Activated B cell treated with CpG ODN at 0.5 μM for 24 hours (primary cell): ENCODE measurements at regions of chr7 and their contacts with region 1.

Region 1: GRCh38 chr7:130961128-130961601 is 227.2 kb upstream of the KLF14 start:
- DNase-seq: peak; percentile 54
- ATAC-seq: peak; percentile 78
- H3K4me3 Mint-ChIP-seq: peak overlapping the region; percentile 87
- H3K27ac Mint-ChIP-seq: peak overlapping the region; percentile 98
- H3K4me1 Mint-ChIP-seq: peaks cover 69% of the 10 kb centered on the region
- H3K27me3 Mint-ChIP-seq: no peaks in the 10 kb centered on the region
- CTCF ChIP-seq: no peak

Region 2: DNA sequence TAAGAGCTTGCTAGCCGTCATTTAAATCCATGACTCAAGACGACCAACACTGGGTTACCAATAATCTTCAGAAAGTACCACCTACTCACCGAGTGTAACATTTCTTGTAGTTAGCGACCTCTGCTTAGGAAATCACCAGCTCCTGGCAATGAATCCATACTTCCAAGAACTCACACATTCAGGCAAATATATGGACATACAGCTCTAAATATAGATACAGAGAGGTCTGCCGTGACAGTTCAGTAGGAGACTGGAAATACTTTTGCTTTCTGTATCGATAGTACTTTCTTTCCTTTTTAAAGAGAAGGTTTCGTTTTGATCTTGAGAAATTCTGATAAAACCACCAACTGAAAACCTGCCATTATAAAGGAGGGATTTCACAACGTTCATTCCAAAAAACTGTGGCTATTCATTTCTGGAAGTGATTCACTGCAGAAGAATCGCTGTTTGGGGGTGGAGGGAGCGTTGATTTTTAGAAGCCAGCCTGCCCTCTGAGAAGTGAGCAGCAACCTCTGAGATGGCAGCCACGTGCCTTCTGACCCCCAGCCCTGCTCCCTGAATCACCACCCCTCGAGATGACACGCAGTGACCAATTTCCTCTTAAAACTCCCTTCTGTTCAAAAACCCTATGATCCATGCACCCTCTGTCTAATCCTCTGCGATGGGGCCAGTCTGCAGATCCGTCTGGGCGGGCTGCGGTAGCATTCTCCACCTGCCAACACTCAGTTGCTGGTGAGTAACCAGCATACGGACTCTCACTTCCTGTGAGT is 48.1 kb before region 1 on chr7:
- CTCF ChIA-PET with region 1: no interaction called
- POLR2A ChIA-PET with region 1: interaction called, 36 read pairs
- intact Hi-C with region 1: loop called (anchors 1 kb)
- DNase-seq: peak; percentile 54
- ATAC-seq: peak; percentile 91
- H3K4me3 Mint-ChIP-seq: peak overlapping the region; percentile 87
- H3K27ac Mint-ChIP-seq: peak overlapping the region; percentile 90
- H3K4me1 Mint-ChIP-seq: peaks cover 86% of the 10 kb centered on the region
- H3K27me3 Mint-ChIP-seq: no peaks in the 10 kb centered on the region
- CTCF ChIP-seq: no peak

Region 3: GRCh38 chr7:130941322-130942210 is 19.6 kb before region 1 on chr7:
- CTCF ChIA-PET with region 1: interaction called, 4 read pairs
- POLR2A ChIA-PET with region 1: interaction called, 117 read pairs
- intact Hi-C with region 1: loop called (anchors 1 kb)
- DNase-seq: no peak
- ATAC-seq: no peak
- H3K4me3 Mint-ChIP-seq: peak overlapping the region; percentile 78
- H3K27ac Mint-ChIP-seq: peak overlapping the region; percentile 84
- H3K4me1 Mint-ChIP-seq: peaks cover 90% of the 10 kb centered on the region
- H3K27me3 Mint-ChIP-seq: no peaks in the 10 kb centered on the region
- CTCF ChIP-seq: no peak

Region 4: GRCh38 chr7:131027287-131027773 is 66.2 kb after region 1 on chr7:
- CTCF ChIA-PET with region 1: no interaction called
- POLR2A ChIA-PET with region 1: interaction called, 24 read pairs
- intact Hi-C with region 1: loop called (anchors 1 kb)
- DNase-seq: no peak
- ATAC-seq: peak; percentile 6
- H3K4me3 Mint-ChIP-seq: peak overlapping the region; percentile 66
- H3K27ac Mint-ChIP-seq: peak overlapping the region; percentile 98
- H3K4me1 Mint-ChIP-seq: peaks cover 93% of the 10 kb centered on the region
- H3K27me3 Mint-ChIP-seq: no peaks in the 10 kb centered on the region
- CTCF ChIP-seq: no peak

Region 5: GRCh38 chr7:131057015-131057793 is 96.0 kb after region 1 on chr7:
- CTCF ChIA-PET with region 1: no interaction called
- POLR2A ChIA-PET with region 1: interaction called, 19 read pairs
- intact Hi-C with region 1: no loop called
- DNase-seq: no peak
- ATAC-seq: peak; percentile 59
- H3K4me3 Mint-ChIP-seq: peak overlapping the region; percentile 76
- H3K27ac Mint-ChIP-seq: peak overlapping the region; percentile 97
- H3K4me1 Mint-ChIP-seq: peaks cover 79% of the 10 kb centered on the region
- H3K27me3 Mint-ChIP-seq: no peaks in the 10 kb centered on the region
- CTCF ChIP-seq: no peak

Region 6: DNA sequence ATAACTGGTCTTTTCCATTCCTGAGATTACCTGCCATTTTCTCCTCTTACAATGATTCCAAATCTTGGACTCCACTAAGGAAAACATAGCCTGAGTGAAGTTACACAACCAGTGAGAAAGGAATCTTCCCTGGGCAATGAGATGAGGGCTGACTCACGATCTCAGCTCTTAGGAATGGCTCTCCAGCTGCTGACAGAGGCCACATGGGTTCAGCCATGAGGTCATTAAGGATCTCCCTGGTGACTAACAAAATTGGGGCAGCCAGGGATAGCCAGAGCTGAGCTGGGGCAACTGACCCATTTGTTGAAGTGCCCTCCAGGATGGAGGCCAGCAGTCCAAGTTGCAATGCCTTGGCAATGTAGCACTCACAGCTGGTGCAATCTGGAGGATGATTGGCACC is 287.8 kb after region 1 on chr7:
- CTCF ChIA-PET with region 1: no interaction called
- POLR2A ChIA-PET with region 1: no interaction called
- intact Hi-C with region 1: no loop called
- DNase-seq: no peak
- ATAC-seq: no peak
- H3K4me3 Mint-ChIP-seq: no peak overlapping the region
- H3K27ac Mint-ChIP-seq: no peak overlapping the region
- H3K4me1 Mint-ChIP-seq: no peaks in the 10 kb centered on the region
- H3K27me3 Mint-ChIP-seq: peaks cover 10% of the 10 kb centered on the region
- CTCF ChIP-seq: no peak

Region 7: DNA sequence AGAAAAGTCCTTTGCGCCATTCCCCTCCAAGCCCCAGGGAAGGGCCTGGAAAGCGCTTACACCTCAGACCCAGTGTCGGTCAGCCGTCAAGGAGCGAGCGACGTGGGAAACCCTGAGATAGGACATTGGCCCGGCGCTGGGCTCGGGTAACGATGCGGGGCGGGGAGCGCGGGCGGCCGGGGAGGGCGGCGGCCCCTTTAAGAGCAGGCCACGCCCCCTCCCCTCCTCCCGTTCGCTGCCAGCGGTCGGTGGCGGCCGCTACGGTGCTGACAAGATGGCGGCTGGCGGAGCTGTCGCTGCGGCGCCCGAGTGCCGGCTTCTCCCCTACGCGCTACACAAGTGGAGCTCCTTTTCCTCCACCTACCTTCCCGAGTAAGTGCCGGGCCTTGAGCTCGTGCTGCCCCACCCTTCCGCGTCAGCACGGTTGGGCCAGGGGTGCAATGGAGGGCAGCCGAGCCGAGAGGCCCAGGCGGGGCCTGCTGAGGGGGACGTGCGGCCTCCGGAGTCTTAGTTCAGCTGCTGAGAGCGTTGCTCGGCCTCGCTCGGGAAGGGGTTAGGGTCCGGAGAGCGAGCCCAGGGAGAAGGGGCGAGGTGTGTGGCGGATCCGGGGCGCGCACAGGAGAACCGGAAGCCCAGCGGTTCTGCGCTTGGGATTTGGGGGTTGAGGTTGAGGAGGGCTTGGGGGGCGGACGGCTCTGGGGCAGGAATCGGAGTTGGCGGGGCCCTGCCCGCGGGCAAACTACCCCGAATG is 366.6 kb after region 1 on chr7 and contains the start of gene MKLN1:
- CTCF ChIA-PET with region 1: no interaction called
- POLR2A ChIA-PET with region 1: interaction called, 3 read pairs
- intact Hi-C with region 1: loop called (anchors 5 kb)
- DNase-seq: peak; percentile 85
- ATAC-seq: peak; percentile 96
- H3K4me3 Mint-ChIP-seq: peak within 1 kb of the TSS; percentile 98
- H3K27ac Mint-ChIP-seq: peak within 1 kb of the TSS; percentile 95
- H3K4me1 Mint-ChIP-seq: peaks cover 57% of the 10 kb centered on the region
- H3K27me3 Mint-ChIP-seq: no peaks in the 10 kb centered on the region
- CTCF ChIP-seq: no peak
- total RNA-seq, gene MKLN1: 48.9 and 64.6 TPM in 2 replicates

Region 8: DNA sequence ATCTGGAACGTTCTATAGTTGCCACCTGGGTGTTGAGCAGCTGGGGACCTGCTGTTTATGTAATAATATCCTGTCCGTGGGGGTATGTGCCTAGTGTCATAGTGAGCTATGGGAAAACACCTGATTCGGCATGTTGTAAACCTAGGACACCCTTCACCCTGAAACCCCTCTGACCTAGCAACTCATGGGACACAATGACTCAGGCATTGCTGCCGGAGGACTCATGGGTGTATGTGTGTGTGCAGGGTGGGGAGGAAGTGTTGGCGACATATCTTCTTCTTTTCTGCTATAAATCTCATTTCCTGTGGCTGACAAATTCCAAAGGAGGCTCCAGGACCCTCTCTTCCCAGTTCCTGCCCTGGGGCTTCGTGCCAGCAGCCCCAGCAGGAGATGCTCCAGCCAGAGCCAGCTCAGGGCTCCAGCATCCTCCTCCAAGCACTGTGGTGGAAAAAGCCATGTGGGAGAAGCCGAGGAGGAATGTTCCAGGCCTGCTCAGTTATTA is 672.2 kb after region 1 on chr7:
- CTCF ChIA-PET with region 1: no interaction called
- POLR2A ChIA-PET with region 1: no interaction called
- intact Hi-C with region 1: no loop called
- DNase-seq: no peak
- ATAC-seq: no peak
- H3K4me3 Mint-ChIP-seq: no peak overlapping the region
- H3K27ac Mint-ChIP-seq: no peak overlapping the region
- H3K4me1 Mint-ChIP-seq: no peaks in the 10 kb centered on the region
- H3K27me3 Mint-ChIP-seq: peaks cover 8% of the 10 kb centered on the region
- CTCF ChIP-seq: no peak